PC-3 (cell line): ENCODE measurements at regions of chr9 and their contacts with region 1.

Region 1: DNA sequence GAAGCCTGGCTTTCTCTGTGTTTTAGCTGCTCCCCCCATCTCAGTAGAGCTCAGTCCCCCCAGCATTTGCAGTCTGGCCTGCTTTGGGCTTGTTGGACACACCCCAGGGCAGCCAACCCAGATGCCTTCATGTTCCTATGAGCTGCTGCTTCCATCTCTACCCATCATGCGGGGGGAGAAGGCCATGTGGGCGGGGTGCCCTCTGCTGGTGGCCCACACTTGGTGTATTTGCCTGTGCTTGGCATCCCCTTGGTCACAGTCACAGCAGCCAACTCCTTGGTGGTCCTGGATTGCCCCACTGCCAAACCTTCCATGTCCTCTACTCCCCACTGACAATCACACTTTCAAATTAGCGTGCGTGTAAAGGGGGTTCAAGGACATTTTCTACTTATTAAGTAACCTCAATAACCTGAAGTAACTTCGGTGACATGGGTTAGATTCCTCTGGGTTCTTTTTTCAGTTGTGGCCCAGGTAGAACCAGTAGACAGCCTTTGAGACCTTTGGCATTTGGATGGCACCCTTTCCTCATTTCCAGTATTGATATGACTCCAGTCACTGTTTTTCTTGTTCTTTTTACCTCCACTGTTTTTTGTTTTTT is 42.8 kb downstream of the SNX30 start:
- DNase-seq: peak; percentile 69
- ATAC-seq: peak; percentile 82
- H3K4me3 ChIP-seq: no peak overlapping the region
- H3K27ac ChIP-seq: no peak overlapping the region
- H3K4me1 ChIP-seq: no peaks in the 10 kb centered on the region
- H3K27me3 ChIP-seq: no peaks in the 10 kb centered on the region
- CTCF ChIP-seq: peak; percentile 84

Region 2: GRCh38 chr9:112750111-112750767 is 43.1 kb before region 1 on chr9 and contains the start of gene SNX30:
- CTCF ChIA-PET with region 1: no interaction called
- POLR2A ChIA-PET with region 1: no interaction called
- intact Hi-C with region 1: loop called (anchors 5 kb)
- DNase-seq: peak; percentile 86
- ATAC-seq: peak; percentile 49
- H3K4me3 ChIP-seq: peak within 1 kb of the TSS; percentile 95
- H3K27ac ChIP-seq: peak within 1 kb of the TSS; percentile 47
- H3K4me1 ChIP-seq: peaks cover 40% of the 10 kb centered on the region
- H3K27me3 ChIP-seq: no peaks in the 10 kb centered on the region
- CTCF ChIP-seq: no peak
- total RNA-seq, gene SNX30: 6.4 and 13.6 TPM in 2 replicates